ENCODE measurements at regions of chr9 and their contacts with region 1.

Region 1: DNA sequence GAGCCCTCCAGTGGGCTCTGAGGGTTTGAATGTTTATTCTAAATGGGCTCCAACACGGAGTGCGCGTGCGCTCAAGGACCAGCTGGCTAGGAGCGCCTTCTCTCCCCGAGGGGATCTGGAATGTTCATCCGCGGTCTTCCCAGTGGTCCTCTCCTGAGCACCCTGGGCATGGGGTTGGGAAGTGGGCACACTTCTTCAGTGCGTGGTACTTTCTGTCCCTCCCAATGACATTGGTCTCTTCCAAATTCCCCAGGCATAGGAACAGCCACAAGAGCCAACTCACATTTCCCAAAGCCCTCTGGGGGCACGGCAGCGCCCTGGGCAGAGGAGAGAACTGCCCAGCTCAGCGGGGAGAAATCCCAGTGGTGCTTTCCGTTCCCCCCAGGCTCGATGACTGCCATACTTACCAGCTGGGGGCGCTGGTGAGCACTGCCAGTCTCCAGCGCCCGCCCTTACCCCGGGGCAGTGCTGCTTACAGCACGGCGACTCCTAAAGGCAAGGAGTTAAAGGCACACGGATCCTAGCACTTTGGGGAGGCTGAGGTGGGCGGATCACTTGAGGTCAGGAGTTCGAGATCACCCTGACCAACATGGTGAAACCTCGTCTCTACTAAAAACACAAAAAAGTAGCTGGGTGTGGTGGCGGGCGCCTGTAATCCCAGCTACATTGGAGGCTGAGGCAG is 29.9 kb upstream of the OBP2B start:
- DNase-seq: peak; percentile 54 to 82 (median 66)
- ATAC-seq: peak; percentile 43 to 73 (median 65)
- H3K4me3 ChIP-seq: peak overlapping the region in 11 of 12 donors; percentile 18 to 59 (median 45)
- H3K27ac ChIP-seq: peak overlapping the region; percentile 65 to 95 (median 88)
- H3K4me1 ChIP-seq: peaks cover 0 to 30% (median 21%) of the 10 kb centered on the region in 12 donors
- H3K27me3 ChIP-seq: no peaks in the 10 kb centered on the region
- CTCF ChIP-seq: peak; percentile 64 to 87 (median 78)
- POLR2A ChIP-seq: no peak

Region 2: DNA sequence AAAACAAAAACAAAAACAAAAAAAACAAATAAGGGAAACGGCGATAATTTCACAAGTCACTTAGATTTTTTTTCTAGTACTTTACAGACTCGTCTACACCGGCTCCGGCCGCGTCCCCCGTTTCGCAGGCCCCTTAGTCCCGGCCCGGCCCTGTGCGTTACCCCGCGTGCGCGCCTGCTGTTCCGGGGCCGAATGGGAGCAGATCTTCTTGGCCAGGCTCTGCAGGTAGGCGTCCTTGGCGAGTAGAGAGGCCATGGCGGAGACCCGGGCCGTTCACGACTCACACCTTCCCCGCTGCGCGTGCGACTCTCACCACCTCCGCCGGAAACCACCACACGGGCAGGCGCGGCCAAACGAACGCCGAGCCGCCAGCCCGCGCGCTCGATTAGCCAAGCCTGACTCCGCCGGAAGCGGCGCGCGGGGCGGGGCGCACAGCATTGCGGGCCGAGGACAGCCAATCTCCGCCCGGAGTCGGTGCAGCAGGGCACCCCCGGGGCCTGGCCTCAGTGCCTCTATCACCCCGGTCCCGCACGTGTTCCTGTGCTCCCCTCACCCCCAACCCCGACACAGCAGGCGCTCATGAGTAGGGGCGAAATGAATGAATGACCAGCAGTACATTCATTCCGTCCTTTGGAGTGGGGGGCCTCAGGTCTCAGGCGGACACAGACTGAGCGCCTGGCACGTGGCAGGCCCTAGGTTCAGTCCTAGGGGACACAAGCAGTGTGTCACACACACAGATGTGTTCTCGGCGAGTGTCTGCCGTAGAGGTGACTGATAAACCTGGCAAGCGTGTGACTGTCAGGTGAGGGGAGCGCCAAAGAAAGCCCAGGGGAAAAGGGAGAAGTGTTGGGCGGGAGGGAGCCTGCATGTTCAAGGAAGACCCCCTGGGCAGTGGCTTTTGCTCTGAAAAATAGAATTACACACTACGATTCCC is 97.2 kb after region 1 on chr9 and contains the start of gene SURF6:
- intact Hi-C with region 1: loop called in 1 of 10 experiments (anchors 10 kb)
- DNase-seq: peak; percentile 91 to 96 (median 93)
- ATAC-seq: peak; percentile 89 to 97 (median 96)
- H3K4me3 ChIP-seq: peak within 1 kb of the TSS; percentile 68 to 100 (median 82)
- H3K27ac ChIP-seq: peak within 1 kb of the TSS in 11 of 12 donors; percentile 64 to 91 (median 81)
- H3K4me1 ChIP-seq: peaks cover 6 to 45% (median 20%) of the 10 kb centered on the region in 12 donors
- H3K27me3 ChIP-seq: no peaks in the 10 kb centered on the region
- CTCF ChIP-seq: no peak
- POLR2A ChIP-seq: peak in 1 of 2 donors; percentile 76
- total RNA-seq, gene SURF6: 9.2 to 16.0 (median 11.1) TPM

Measured in heart left ventricle (tissue), 16 donors.